Common myeloid progenitor, CD34-positive (primary cell): ENCODE measurements at regions of chr11 and their contacts with region 1.

Region 1: DNA sequence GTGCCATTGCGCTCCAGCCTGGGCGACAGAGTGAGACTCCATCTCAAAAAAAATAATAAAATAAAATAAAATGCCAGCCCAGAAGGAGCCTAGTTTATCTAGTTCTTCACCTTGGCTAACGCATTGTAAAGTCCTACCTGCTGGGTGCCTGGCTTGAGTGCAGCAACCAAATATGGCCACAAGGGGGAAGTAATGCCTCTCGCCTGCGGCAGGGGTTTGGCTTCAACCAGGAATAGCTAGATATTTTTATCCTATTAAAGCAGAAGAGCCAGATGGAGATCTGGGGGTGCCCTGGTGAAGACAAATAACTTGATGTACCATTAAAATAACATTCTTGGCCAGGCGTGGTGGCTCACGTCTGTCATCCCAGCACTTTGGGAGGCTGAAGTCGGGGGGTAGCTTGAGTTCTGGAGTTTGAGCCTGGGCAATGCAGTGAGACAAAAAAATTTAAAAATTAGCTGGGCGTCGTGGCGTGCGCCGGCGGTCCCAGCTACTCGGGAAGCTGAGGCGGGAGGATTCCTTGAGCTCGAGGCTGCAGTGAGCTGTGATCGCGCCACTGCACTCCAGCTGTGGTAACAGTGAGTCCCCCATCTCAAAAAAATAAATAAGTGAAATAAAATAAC is 20.6 kb upstream of the PLEKHB1 start:
- DNase-seq: peak; percentile 72 to 84 (median 80)
- H3K4me3 ChIP-seq: no peak overlapping the region
- H3K27ac ChIP-seq: no peak overlapping the region
- H3K4me1 ChIP-seq: peaks cover 10 to 23% (median 18%) of the 10 kb centered on the region in 4 experiments
- H3K27me3 ChIP-seq: no peaks in the 10 kb centered on the region

Region 2: GRCh38 chr11:73404048-73404447 is 221.8 kb before region 1 on chr11:
- CTCF ChIA-PET with region 1: interaction called, 14 read pairs
- POLR2A ChIA-PET with region 1: no interaction called
- DNase-seq: peak; percentile 58 to 80 (median 77)
- H3K4me3 ChIP-seq: no peak overlapping the region
- H3K27ac ChIP-seq: no peak overlapping the region
- H3K4me1 ChIP-seq: peaks cover 0 to 5% (median 1%) of the 10 kb centered on the region in 4 experiments
- H3K27me3 ChIP-seq: no peaks in the 10 kb centered on the region

Region 3: DNA sequence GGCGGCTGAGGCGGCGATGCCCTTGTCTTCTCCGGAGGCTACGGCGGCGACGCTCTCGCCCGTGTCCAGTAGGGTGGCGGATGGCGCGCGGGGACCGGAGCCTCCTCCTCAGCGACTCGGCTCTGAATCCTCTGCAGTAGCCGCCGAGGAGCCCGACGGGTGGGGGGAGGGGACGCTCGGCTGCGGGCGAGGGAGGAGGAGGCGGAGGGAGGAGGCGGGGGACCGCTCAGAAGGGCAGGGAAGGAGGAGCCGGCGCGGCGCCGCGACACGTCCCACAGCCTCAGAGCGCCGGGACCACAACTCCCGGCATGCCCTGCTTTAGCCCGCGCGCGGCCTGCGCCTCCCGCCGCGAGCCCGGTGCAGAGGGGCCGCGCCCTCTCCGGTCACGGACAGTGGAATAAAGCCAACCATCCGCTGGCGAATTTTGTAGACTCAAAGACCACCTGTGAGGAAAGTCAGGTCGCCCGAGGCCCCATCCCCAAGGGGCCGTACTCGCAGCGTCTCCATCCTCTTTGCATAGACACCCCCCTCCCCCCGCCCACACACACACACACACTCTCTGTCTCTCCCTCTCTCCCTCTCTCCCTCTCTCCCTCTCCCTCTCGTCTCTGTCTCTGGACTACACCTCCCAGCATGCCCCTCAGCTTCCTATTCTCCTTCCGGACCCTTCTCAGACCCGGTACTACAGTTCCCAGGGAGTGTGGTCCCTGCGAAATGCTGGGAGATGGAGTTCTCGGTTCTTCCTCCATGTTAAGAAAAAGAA is 27.7 kb before region 1 on chr11 and contains the start of gene FAM168A:
- CTCF ChIA-PET with region 1: interaction called, 12 read pairs
- POLR2A ChIA-PET with region 1: interaction called, 3 read pairs
- DNase-seq: peak; percentile 95 to 99 (median 98)
- H3K4me3 ChIP-seq: peak within 1 kb of the TSS; percentile 78 to 99 (median 90)
- H3K27ac ChIP-seq: peak within 1 kb of the TSS; percentile 35 to 67
- H3K4me1 ChIP-seq: peaks cover 4 to 17% (median 11%) of the 10 kb centered on the region in 4 experiments
- H3K27me3 ChIP-seq: no peaks in the 10 kb centered on the region

Region 4: GRCh38 chr11:73640592-73640991 is 14.8 kb after region 1 on chr11:
- CTCF ChIA-PET with region 1: interaction called, 29 read pairs
- POLR2A ChIA-PET with region 1: no interaction called
- DNase-seq: no peak
- H3K4me3 ChIP-seq: no peak overlapping the region
- H3K27ac ChIP-seq: no peak overlapping the region
- H3K4me1 ChIP-seq: peaks cover 0 to 6% (median 2%) of the 10 kb centered on the region in 4 experiments
- H3K27me3 ChIP-seq: peaks cover 0 to 1% (median 0%) of the 10 kb centered on the region in 5 experiments